ENCODE measurements at regions of chr5 and their contacts with region 1.

Region 1: GRCh38 chr5:90932052-90932699 is 373.6 kb downstream of the ADGRV1 start:
- DNase-seq: peak in 4 of 10 donors; percentile 12 to 65 (median 28)

Region 2: DNA sequence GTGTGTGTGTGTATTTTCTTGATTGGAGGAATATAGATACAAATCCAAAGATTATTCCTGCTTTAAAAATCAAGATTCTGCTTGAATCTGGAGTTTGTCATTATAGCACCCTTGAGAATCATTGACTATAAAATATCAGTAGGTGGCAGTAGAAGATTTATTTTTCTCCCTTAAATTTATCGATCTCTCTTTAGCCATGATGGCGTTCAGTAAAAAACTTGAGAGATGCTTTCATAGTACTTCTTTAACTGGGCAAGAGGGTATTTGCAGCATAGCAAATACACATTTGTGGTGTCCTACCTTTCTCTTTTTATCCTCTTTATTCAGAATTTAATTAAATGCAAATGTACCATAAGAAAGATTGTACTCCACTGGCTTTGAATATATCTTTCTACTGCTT is 65.8 kb before region 1 on chr5:
- intact Hi-C with region 1: loop called (anchors 2 kb)
- DNase-seq: no peak

Measured in posterior cingulate gyrus (tissue), 11 donors.